ENCODE measurements at regions of chr1 and their contacts with region 1.

Region 1: GRCh38 chr1:9494929-9495758 is 44.1 kb upstream of the SLC25A33 start:
- DNase-seq: peak; percentile 65
- H3K4me3 ChIP-seq: peak overlapping the region; percentile 39 to 49
- H3K27ac ChIP-seq: no peak overlapping the region
- H3K4me1 ChIP-seq: peaks cover 11% of the 10 kb centered on the region
- H3K27me3 ChIP-seq: no peaks in the 10 kb centered on the region
- CTCF ChIP-seq: peak; percentile 97 to 100 (median 97)
- POLR2A ChIP-seq: no peak

Region 2: DNA sequence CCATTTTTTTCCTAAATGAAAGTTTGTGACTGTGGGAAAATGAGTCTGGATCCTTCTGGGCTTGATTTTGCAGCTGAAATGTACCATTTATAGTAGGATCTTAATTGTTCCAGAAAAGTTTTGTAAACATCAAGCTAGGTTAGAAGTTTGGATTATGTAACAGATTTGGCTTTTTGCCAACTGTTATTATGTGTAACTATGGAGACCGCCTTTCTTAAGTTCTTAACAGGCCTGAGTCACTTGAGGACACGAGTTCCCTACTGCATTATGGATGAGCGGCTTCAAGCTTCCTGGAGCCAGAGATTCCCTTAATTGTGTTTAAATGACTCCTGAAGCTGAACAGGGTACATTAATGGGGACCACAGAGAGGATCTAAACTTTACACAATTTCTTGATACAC is 66.3 kb after region 1 on chr1:
- intact Hi-C with region 1: no loop called
- DNase-seq: peak; percentile 48
- H3K4me3 ChIP-seq: no peak overlapping the region
- H3K27ac ChIP-seq: peak overlapping the region in 1 of 2 donors; percentile 65
- H3K4me1 ChIP-seq: no peaks in the 10 kb centered on the region
- H3K27me3 ChIP-seq: no peaks in the 10 kb centered on the region
- CTCF ChIP-seq: no peak
- POLR2A ChIP-seq: no peak

Region 3: DNA sequence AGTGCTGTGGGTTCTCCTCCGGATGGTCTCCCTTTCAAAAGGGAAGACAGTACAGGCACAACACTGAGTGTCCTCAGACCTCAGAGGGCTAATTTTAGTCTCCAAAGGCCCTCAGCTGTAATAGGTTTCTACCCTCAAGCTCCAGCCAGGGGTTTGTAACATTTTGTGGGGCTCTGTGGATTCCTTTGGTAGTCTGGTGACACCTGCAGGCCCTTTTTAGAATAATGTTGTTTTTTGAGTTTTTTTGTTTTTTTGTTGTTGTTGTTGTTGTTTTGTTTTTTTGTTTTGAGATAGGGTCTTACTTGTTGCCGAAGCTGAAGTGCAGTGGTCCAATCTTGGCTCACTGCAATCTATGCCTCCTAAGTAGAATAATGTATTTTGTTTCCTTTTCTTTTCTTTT is 78.6 kb after region 1 on chr1:
- intact Hi-C with region 1: loop called (anchors 10 kb)
- DNase-seq: no peak
- H3K4me3 ChIP-seq: no peak overlapping the region
- H3K27ac ChIP-seq: no peak overlapping the region
- H3K4me1 ChIP-seq: no peaks in the 10 kb centered on the region
- H3K27me3 ChIP-seq: no peaks in the 10 kb centered on the region
- CTCF ChIP-seq: peak; percentile 38 to 43 (median 39)
- POLR2A ChIP-seq: no peak